ENCODE measurements at regions of chr7 and their contacts with region 1.

Region 1: GRCh38 chr7:97027427-97028234 is 3.0 kb upstream of the DLX5 start:
- DNase-seq: peak; percentile 55 to 73
- ATAC-seq: peak; percentile 81 to 91
- H3K4me3 ChIP-seq: peak overlapping the region; percentile 24; the same call in 1 of the 3 replicates
- H3K27ac ChIP-seq: no peak overlapping the region
- H3K4me1 ChIP-seq: peaks cover 5% of the 10 kb centered on the region; the same call in 1 of the 3 replicates
- CTCF ChIP-seq: peak; percentile 84
- EP300 ChIP-seq: no peak
- POLR2A ChIP-seq: no peak
- RAD21 ChIP-seq: peak; percentile 94 to 95

Region 2: DNA sequence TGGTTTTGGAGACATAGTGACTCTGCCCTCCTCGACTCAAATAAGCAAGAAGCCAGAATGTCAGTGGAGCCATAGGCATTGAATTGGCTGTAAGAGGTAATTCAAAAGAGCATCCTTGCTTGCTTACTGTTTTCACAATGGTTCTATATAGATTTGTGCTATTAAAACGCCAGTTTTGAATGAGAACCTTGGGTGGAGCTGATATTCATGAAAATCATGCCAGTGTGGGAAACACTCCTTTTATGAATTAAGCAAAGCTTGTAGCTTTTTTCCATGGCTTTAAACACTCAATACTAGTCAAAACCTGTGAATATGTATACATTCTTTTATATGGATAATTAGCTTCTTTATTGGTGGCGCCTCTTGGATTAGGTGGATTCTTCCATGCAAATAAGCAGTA is 958.2 kb before region 1 on chr7:
- CTCF ChIA-PET with region 1: interaction called, 30 read pairs
- POLR2A ChIA-PET with region 1: no interaction called
- DNase-seq: no peak
- ATAC-seq: no peak
- H3K4me3 ChIP-seq: no peak overlapping the region
- H3K27ac ChIP-seq: no peak overlapping the region
- H3K4me1 ChIP-seq: no peaks in the 10 kb centered on the region
- CTCF ChIP-seq: no peak
- EP300 ChIP-seq: no peak
- POLR2A ChIP-seq: no peak
- RAD21 ChIP-seq: no peak

Region 3: GRCh38 chr7:96075510-96076349 is 951.9 kb before region 1 on chr7:
- CTCF ChIA-PET with region 1: interaction called, 30 read pairs
- POLR2A ChIA-PET with region 1: interaction called, 5 read pairs
- DNase-seq: peak; percentile 53 to 74
- ATAC-seq: peak; percentile 98
- H3K4me3 ChIP-seq: peak overlapping the region; percentile 43
- H3K27ac ChIP-seq: no peak overlapping the region
- H3K4me1 ChIP-seq: peaks cover 4% of the 10 kb centered on the region; the same call in 1 of the 3 replicates
- CTCF ChIP-seq: peak; percentile 89
- EP300 ChIP-seq: no peak
- POLR2A ChIP-seq: no peak
- RAD21 ChIP-seq: peak; percentile 90 to 94

Region 4: DNA sequence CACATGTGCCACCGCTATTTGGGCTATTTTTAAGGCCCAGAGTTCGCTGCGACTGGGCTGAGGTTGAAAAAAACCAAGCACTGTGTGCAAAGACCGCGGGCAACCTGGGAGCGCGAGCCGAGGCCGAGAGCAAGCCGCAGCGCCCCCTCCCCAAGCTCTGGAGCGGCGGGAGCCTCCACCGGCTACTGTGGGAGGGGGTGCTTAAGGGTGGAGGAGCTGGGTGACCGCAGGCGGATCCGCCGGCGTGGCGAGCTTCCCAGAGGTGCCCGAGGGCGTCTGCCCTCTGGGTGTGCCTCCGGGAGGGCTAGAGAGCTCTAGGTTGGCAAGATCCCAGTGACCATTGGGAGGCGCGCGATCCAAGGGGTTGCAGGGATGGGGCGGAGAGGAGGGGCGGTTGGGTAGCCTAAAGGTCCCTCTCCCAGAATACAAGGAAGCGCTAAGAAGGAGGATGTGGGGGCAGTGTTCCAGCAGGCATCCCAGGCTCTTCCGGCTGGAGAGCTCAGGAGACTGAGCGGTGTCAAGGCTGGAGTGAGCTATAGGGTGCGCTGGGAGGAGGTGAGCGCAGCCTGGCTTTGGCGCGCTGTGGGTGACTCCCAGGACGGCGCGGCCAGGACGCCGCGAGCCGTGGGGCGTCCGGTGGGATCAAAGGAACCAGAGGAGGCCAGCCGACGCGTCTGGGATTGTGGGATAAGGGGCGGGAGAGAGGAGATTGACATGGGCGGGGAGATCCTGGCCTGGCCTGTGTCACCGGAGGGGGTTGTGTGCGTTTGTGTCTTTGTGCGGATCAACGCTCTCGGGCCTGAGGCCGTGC is 11.0 kb before region 1 on chr7:
- CTCF ChIA-PET with region 1: interaction called, 40 read pairs
- POLR2A ChIA-PET with region 1: no interaction called
- DNase-seq: peak in 1 of 2 experiments; percentile 19
- ATAC-seq: peak; percentile 67 to 83
- H3K4me3 ChIP-seq: peak overlapping the region; percentile 33
- H3K27ac ChIP-seq: no peak overlapping the region
- H3K4me1 ChIP-seq: peaks cover 9% of the 10 kb centered on the region; the same call in 2 of the 3 replicates
- CTCF ChIP-seq: no peak
- EP300 ChIP-seq: no peak
- POLR2A ChIP-seq: no peak
- RAD21 ChIP-seq: 0 out of 5 replicates have a peak, but pooled peaks of 1 of the 2 experiments have one; percentile 3